Activated naive CD4-positive, alpha-beta T cell treated with anti-CD3 and anti-CD28 coated beads for 36 hours (primary cell): ENCODE measurements at regions of chr4 and their contacts with region 1.

Region 1: DNA sequence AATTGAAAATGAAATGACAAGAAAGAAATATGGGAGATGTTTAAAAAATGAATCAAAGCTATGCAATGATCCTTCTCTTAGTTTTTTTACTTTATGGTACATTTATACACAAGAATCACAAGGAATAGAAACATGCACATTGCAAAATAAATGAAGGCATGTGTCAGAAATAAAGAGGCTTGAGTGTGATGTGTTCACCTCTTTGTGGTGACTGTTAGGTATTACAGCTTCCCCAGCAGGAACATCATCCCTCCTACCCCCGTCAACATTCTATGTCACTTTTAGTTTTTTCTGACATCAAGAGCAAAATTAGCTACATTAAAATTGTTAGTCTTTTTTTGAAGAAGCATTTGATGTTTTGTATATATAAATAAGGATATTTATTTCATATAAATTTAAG is 214.8 kb downstream of the SLC4A4 start:
- DNase-seq: no peak
- H3K4me3 Mint-ChIP-seq: no peak overlapping the region
- H3K27ac Mint-ChIP-seq: no peak overlapping the region
- H3K4me1 Mint-ChIP-seq: peaks cover 3% of the 10 kb centered on the region
- H3K27me3 Mint-ChIP-seq: peaks cover 2% of the 10 kb centered on the region

Region 2: DNA sequence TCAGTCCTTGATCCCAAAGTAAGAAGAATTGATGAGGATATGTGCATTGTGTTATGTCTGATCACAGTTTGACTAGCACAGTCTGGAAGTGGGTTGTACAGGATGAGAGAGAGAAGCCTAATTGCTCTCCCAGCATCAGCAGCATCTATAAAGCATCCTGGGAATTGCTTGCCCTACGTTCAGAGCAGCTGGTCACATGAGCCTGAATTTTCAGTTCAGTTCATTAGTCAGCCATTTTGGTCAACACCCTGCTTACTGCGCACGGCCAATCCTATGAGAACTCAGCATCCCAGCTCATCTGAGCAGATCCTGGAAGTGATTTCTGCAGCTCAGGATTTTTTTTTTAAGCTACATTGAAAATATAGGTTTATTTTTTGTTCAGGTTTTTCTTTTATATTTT is 831.9 kb before region 1 on chr4 and contains the start of gene RUFY3:
- CTCF ChIA-PET with region 1: no interaction called
- intact Hi-C with region 1: no loop called
- DNase-seq: no peak
- H3K4me3 Mint-ChIP-seq: peak within 1 kb of the TSS; percentile 4
- H3K27ac Mint-ChIP-seq: no peak within 1 kb of the TSS
- H3K4me1 Mint-ChIP-seq: peaks cover 24% of the 10 kb centered on the region
- H3K27me3 Mint-ChIP-seq: no peaks in the 10 kb centered on the region
- total RNA-seq, gene RUFY3: 14.9 to 18.0 TPM

Region 3: DNA sequence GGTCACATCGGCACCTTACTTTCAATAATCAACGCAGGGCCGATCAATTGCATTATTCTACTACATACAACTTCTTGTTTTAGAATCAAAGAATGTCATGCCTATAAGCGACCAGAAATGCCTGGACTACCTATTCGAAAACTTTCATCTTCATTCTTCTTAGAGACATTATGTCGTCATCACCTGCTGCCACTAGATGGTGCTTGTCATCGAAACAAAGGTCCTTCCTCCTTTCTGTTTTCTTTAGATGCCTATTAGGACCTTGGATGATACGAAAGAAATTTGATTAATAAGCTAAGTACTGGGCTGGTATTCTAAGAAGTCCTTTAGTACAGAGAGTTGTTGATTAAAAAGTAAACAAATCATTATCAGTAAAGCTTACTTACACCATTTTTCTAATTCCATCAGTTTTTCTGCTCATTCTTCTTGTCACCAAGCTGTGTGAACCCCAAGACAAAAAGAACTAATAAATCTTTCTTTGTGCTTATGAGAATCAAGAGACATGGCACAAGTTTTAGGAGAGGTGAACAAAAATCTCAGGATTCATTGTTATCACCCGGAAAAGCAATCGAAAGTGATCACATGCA is 369.3 kb before region 1 on chr4:
- CTCF ChIA-PET with region 1: no interaction called
- intact Hi-C with region 1: loop called (anchors 5 kb)
- DNase-seq: peak; percentile 69
- H3K4me3 Mint-ChIP-seq: no peak overlapping the region
- H3K27ac Mint-ChIP-seq: no peak overlapping the region
- H3K4me1 Mint-ChIP-seq: peaks cover 18% of the 10 kb centered on the region
- H3K27me3 Mint-ChIP-seq: peaks cover 35% of the 10 kb centered on the region

Region 4: GRCh38 chr4:71229477-71230270 is 323.9 kb before region 1 on chr4:
- CTCF ChIA-PET with region 1: no interaction called
- intact Hi-C with region 1: loop called (anchors 10 kb)
- DNase-seq: peak; percentile 10
- H3K4me3 Mint-ChIP-seq: no peak overlapping the region
- H3K27ac Mint-ChIP-seq: no peak overlapping the region
- H3K4me1 Mint-ChIP-seq: no peaks in the 10 kb centered on the region
- H3K27me3 Mint-ChIP-seq: peaks cover 7% of the 10 kb centered on the region

Region 5: DNA sequence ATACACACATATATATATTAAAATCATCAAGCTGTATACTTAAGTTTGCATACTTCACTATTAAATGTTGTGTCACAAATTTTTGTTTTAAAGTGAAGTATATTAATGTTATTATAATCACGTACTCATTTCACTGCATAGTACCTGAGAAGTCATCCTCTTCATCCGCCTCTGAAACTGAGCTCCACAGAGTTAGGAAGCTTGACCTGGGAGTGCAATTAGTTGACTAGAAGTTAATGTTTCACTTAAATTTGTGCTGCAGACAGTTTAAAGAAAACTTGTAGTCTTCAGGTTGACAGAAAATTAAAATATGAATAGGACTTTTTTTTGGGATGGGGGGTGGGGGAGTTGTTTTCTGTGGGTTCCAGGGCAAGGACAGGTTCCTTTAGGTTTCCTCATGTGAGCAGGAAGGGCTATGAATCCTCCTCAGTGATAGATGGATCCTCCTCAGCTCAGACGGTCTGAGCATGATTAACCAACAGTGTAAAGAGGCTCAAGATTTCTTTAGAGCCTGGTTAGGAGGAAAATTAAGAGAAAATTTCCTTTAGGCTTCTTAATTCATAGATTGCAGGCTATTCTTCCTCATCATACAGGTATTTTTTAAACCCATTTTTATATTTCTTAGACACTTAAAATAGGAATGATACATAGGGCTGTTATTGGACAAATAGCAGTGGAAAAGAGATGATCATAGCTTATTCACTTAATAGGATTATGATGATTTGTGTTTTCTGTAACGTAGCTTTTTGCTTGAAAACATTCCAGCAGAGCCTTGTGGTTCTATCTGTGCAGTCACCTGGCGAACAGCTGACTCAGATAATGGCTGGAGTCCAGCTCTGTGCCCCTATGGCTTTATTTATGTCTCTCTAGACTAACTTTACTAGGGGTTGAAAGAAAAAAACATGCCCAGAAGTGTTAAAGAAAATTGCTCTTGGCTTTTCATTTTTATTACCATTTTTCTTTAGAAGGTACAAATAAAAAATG is 112.1 kb before region 1 on chr4:
- CTCF ChIA-PET with region 1: no interaction called
- intact Hi-C with region 1: no loop called
- DNase-seq: no peak
- H3K4me3 Mint-ChIP-seq: no peak overlapping the region
- H3K27ac Mint-ChIP-seq: no peak overlapping the region
- H3K4me1 Mint-ChIP-seq: no peaks in the 10 kb centered on the region
- H3K27me3 Mint-ChIP-seq: no peaks in the 10 kb centered on the region